Left cardiac atrium (tissue), 4 donors: ENCODE measurements at regions of chr18 and their contacts with region 1.

Region 1: GRCh38 chr18:62637807-62638687 is 77.3 kb upstream of the PHLPP1 start:
- DNase-seq: no peak
- ATAC-seq: no peak

Region 2: GRCh38 chr18:62658028-62658427 is 20.0 kb after region 1 on chr18:
- intact Hi-C with region 1: loop called in 1 of 2 experiments (anchors 1 kb)
- DNase-seq: no peak
- ATAC-seq: no peak